ENCODE measurements at regions of chr13 and their contacts with region 1.

Region 1: DNA sequence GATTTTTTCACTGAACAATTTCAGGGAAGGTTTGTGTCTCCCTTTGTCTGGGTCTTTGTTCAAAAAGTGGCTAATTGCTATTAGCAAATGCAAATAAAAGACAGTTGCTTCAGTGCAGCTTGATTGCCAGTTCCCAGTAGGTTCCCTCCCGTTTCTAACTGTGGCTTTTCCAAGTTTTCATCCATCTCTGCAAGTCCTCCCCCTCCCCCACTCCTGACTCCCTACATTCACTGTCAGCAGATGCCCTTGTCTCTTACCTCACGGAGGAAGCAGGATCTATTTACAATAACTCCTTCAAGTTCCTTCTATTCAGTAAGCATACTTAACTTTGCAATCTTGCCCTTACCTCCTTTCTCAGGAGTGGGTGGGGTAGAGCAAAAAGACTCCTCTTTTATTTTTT is 55.4 kb upstream of the SCEL start:
- DNase-seq: no peak
- ATAC-seq: no peak
- H3K4me3 Mint-ChIP-seq: no peak overlapping the region
- H3K27ac Mint-ChIP-seq: no peak overlapping the region
- H3K4me1 Mint-ChIP-seq: peaks cover 14% of the 10 kb centered on the region
- H3K27me3 Mint-ChIP-seq: no peaks in the 10 kb centered on the region

Region 2: GRCh38 chr13:77026818-77027585 is 453.1 kb before region 1 on chr13 and contains the start of gene FBXL3:
- CTCF ChIA-PET with region 1: interaction called, 5 read pairs
- POLR2A ChIA-PET with region 1: interaction called, 4 read pairs
- intact Hi-C with region 1: loop called (anchors 2 to 5 kb)
- DNase-seq: peak; percentile 89
- ATAC-seq: peak; percentile 59
- H3K4me3 Mint-ChIP-seq: peak within 1 kb of the TSS; percentile 92
- H3K27ac Mint-ChIP-seq: peak within 1 kb of the TSS; percentile 96
- H3K4me1 Mint-ChIP-seq: peaks cover 47% of the 10 kb centered on the region
- H3K27me3 Mint-ChIP-seq: peaks cover 2% of the 10 kb centered on the region
- total RNA-seq, gene FBXL3: 28.4 to 31.6 TPM

Region 3: DNA sequence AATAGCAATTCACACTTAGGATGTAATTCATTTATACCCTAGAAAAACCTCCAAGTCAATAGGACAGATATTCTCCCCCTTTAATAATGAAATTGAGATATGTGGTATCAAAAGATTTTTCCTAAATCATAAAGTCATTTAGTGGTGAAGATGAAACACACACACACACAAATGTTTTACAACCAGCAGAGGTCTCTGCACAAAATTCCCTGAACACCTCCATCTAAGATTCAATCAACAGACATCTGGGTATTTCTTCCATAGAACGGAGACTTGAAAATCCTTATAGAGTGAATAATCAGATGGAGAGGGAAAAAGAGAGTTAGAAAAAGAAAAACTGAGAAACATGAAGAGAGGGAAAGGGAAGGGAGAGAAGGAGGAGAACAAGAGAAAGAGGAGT is 205.9 kb before region 1 on chr13:
- CTCF ChIA-PET with region 1: interaction called, 5 read pairs
- POLR2A ChIA-PET with region 1: no interaction called
- intact Hi-C with region 1: loop called in 1 of 2 experiments (anchors 5 kb)
- DNase-seq: no peak
- ATAC-seq: no peak
- H3K4me3 Mint-ChIP-seq: no peak overlapping the region
- H3K27ac Mint-ChIP-seq: no peak overlapping the region
- H3K4me1 Mint-ChIP-seq: peaks cover 16% of the 10 kb centered on the region
- H3K27me3 Mint-ChIP-seq: no peaks in the 10 kb centered on the region

Region 4: GRCh38 chr13:77345150-77345780 is 134.8 kb before region 1 on chr13:
- CTCF ChIA-PET with region 1: interaction called, 3 read pairs
- POLR2A ChIA-PET with region 1: no interaction called
- intact Hi-C with region 1: loop called (anchors 5 kb)
- DNase-seq: peak; percentile 33
- ATAC-seq: peak; percentile 90
- H3K4me3 Mint-ChIP-seq: peak overlapping the region; percentile 11
- H3K27ac Mint-ChIP-seq: peak overlapping the region; percentile 72
- H3K4me1 Mint-ChIP-seq: peaks cover 15% of the 10 kb centered on the region
- H3K27me3 Mint-ChIP-seq: no peaks in the 10 kb centered on the region

Region 5: GRCh38 chr13:77465603-77466205 is 14.4 kb before region 1 on chr13:
- CTCF ChIA-PET with region 1: interaction called, 11 read pairs
- POLR2A ChIA-PET with region 1: interaction called, 4 read pairs
- intact Hi-C with region 1: no loop called
- DNase-seq: no peak
- ATAC-seq: no peak
- H3K4me3 Mint-ChIP-seq: no peak overlapping the region
- H3K27ac Mint-ChIP-seq: no peak overlapping the region
- H3K4me1 Mint-ChIP-seq: no peaks in the 10 kb centered on the region
- H3K27me3 Mint-ChIP-seq: peaks cover 3% of the 10 kb centered on the region

Region 6: GRCh38 chr13:77579959-77580358 is 99.9 kb after region 1 on chr13:
- CTCF ChIA-PET with region 1: no interaction called
- POLR2A ChIA-PET with region 1: no interaction called
- intact Hi-C with region 1: no loop called
- DNase-seq: no peak
- ATAC-seq: no peak
- H3K4me3 Mint-ChIP-seq: no peak overlapping the region
- H3K27ac Mint-ChIP-seq: no peak overlapping the region
- H3K4me1 Mint-ChIP-seq: no peaks in the 10 kb centered on the region
- H3K27me3 Mint-ChIP-seq: peaks cover 24% of the 10 kb centered on the region

Region 7: GRCh38 chr13:77751513-77752456 is 271.7 kb after region 1 on chr13:
- CTCF ChIA-PET with region 1: no interaction called
- POLR2A ChIA-PET with region 1: no interaction called
- intact Hi-C with region 1: loop called in 1 of 2 experiments (anchors 5 kb)
- DNase-seq: peak; percentile 60
- ATAC-seq: peak; percentile 90
- H3K4me3 Mint-ChIP-seq: no peak overlapping the region
- H3K27ac Mint-ChIP-seq: peak overlapping the region; percentile 28
- H3K4me1 Mint-ChIP-seq: peaks cover 18% of the 10 kb centered on the region
- H3K27me3 Mint-ChIP-seq: no peaks in the 10 kb centered on the region

Measured in activated CD4-positive, alpha-beta T cell treated with anti-CD3 and anti-CD28 coated beads for 36 hours (primary cell).